AG04450 (cell line): ENCODE measurements at regions of chr2 and their contacts with region 1.

Region 1: GRCh38 chr2:237201461-237202287 is 116.0 kb downstream of the COPS8 start:
- DNase-seq: no peak
- H3K4me3 ChIP-seq: no peak overlapping the region
- H3K27ac ChIP-seq: peak overlapping the region; percentile 89
- H3K27me3 ChIP-seq: no peaks in the 10 kb centered on the region
- CTCF ChIP-seq: no peak

Region 2: DNA sequence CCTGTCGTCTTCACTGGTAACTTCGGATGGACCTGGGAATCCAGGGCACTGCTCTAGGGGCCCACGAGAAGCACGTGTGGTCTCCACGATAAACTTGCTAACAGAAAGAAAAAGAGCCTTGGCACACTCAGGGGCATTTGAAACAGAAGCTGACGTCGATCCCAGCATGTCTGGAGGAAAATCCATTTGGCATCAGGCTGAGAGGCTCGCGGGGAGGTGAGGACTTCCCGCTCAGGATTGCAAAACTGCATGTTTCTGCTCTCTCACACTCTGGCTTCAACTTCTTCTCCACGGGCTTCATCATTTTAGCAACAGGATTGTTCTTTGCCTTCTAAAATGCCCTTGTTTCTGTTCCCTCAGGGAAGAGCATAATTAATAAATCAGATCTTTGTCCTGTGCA is 297.7 kb before region 1 on chr2:
- CTCF ChIA-PET with region 1: no interaction called
- POLR2A ChIA-PET with region 1: no interaction called
- DNase-seq: no peak
- H3K4me3 ChIP-seq: no peak overlapping the region
- H3K27ac ChIP-seq: no peak overlapping the region
- H3K27me3 ChIP-seq: peaks cover 22% of the 10 kb centered on the region
- CTCF ChIP-seq: no peak

Region 3: DNA sequence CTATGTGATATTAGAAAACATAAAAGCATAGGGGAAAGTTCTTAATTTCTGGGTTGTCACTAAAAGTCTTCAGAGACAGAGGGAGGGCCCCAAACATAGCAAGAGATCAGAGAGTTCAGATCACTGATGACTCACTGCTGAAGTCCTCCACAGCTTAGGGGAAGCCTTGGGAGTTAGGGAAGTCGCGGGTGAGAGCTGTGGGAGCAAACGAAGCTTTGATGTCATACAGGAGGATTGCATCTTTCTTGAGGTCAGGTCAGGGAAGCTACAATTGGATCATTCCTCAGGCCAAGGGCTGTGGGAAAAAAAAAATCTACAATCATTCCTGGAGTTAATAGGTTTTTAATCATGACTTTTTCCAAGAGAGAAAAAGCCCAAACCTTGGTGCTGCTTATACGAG is 19.8 kb before region 1 on chr2:
- CTCF ChIA-PET with region 1: interaction called, 4 read pairs
- POLR2A ChIA-PET with region 1: interaction called, 17 read pairs
- DNase-seq: peak; percentile 94
- H3K4me3 ChIP-seq: no peak overlapping the region
- H3K27ac ChIP-seq: peak overlapping the region; percentile 99
- H3K27me3 ChIP-seq: no peaks in the 10 kb centered on the region
- CTCF ChIP-seq: no peak

Region 4: GRCh38 chr2:237223201-237223861 is 21.7 kb after region 1 on chr2:
- CTCF ChIA-PET with region 1: no interaction called
- POLR2A ChIA-PET with region 1: interaction called, 11 read pairs
- DNase-seq: peak; percentile 95
- H3K4me3 ChIP-seq: no peak overlapping the region
- H3K27ac ChIP-seq: peak overlapping the region; percentile 100
- H3K27me3 ChIP-seq: no peaks in the 10 kb centered on the region
- CTCF ChIP-seq: no peak